ENCODE measurements at regions of chr1 and their contacts with region 1.

Region 1: GRCh38 chr1:43660355-43660754 is 10.4 kb downstream of the KDM4A start:
- DNase-seq: no peak
- ATAC-seq: no peak
- H3K4me3 ChIP-seq: no peak overlapping the region
- H3K27ac ChIP-seq: no peak overlapping the region
- H3K4me1 ChIP-seq: no peaks in the 10 kb centered on the region
- H3K27me3 ChIP-seq: no peaks in the 10 kb centered on the region
- CTCF ChIP-seq: no peak
- POLR2A ChIP-seq: no peak

Region 2: GRCh38 chr1:43699281-43699680 is 38.9 kb after region 1 on chr1:
- intact Hi-C with region 1: loop called in 1 of 10 experiments (anchors 5 kb)
- DNase-seq: no peak
- ATAC-seq: no peak
- H3K4me3 ChIP-seq: no peak overlapping the region
- H3K27ac ChIP-seq: no peak overlapping the region
- H3K4me1 ChIP-seq: no peaks in the 10 kb centered on the region
- H3K27me3 ChIP-seq: no peaks in the 10 kb centered on the region
- CTCF ChIP-seq: no peak
- POLR2A ChIP-seq: no peak

Region 3: DNA sequence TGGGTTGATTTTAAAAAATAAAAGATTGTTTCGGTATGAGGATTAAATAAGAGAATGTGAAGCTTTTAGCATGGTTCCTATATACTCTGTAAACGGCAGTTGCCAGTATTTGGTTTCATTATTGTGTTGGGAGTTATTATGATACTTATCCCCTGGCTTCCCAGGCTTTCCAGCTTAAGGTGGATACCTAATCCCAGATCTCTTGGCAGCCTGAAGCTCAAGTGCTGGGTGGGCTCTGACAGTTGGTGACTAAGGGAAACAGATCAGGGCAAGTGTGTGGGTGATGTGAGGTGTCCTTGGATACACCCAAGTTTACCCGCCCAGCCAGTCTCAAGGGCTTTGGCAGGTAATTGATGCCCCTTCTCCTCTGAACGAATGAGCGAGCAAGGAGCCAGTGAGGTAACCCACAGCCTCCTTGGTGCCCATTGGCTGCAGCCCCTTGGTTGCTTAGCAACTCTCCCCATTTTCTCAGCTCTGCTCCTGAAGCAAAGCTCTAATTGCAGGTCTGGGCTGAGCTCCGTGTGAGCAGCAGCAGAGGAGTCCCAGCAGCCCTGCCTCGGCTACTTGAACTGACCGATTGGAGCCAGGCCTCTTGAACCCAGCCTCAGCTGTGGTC is 292.5 kb after region 1 on chr1:
- intact Hi-C with region 1: no loop called
- DNase-seq: no peak
- ATAC-seq: no peak
- H3K4me3 ChIP-seq: no peak overlapping the region
- H3K27ac ChIP-seq: peak overlapping the region in 1 of 12 donors; percentile 33
- H3K4me1 ChIP-seq: peaks cover 6 to 65% (median 37%) of the 10 kb centered on the region in 12 donors
- H3K27me3 ChIP-seq: no peaks in the 10 kb centered on the region
- CTCF ChIP-seq: no peak
- POLR2A ChIP-seq: no peak

Measured in heart left ventricle (tissue), 16 donors.